Activated CD4-positive, alpha-beta memory T cell treated with anti-CD3 and anti-CD28 coated beads for 36 hours (primary cell): ENCODE measurements at regions of chr7 and their contacts with region 1.

Region 1: GRCh38 chr7:64562626-64563275 is at the start of gene ZNF680:
- DNase-seq: peak; percentile 95
- H3K4me3 Mint-ChIP-seq: peak within 1 kb of the TSS; percentile 97
- H3K27ac Mint-ChIP-seq: peak within 1 kb of the TSS; percentile 96
- H3K4me1 Mint-ChIP-seq: peaks cover 16% of the 10 kb centered on the region
- H3K27me3 Mint-ChIP-seq: no peaks in the 10 kb centered on the region
- total RNA-seq, gene ZNF680: 13.0 to 13.5 TPM

Region 2: GRCh38 chr7:63925623-63926460 is 636.9 kb before region 1 on chr7:
- CTCF ChIA-PET with region 1: no interaction called
- POLR2A ChIA-PET with region 1: no interaction called
- intact Hi-C with region 1: loop called (anchors 5 kb)
- DNase-seq: peak; percentile 91
- H3K4me3 Mint-ChIP-seq: peak overlapping the region; percentile 89
- H3K27ac Mint-ChIP-seq: peak overlapping the region; percentile 93
- H3K4me1 Mint-ChIP-seq: peaks cover 6% of the 10 kb centered on the region
- H3K27me3 Mint-ChIP-seq: no peaks in the 10 kb centered on the region

Region 3: DNA sequence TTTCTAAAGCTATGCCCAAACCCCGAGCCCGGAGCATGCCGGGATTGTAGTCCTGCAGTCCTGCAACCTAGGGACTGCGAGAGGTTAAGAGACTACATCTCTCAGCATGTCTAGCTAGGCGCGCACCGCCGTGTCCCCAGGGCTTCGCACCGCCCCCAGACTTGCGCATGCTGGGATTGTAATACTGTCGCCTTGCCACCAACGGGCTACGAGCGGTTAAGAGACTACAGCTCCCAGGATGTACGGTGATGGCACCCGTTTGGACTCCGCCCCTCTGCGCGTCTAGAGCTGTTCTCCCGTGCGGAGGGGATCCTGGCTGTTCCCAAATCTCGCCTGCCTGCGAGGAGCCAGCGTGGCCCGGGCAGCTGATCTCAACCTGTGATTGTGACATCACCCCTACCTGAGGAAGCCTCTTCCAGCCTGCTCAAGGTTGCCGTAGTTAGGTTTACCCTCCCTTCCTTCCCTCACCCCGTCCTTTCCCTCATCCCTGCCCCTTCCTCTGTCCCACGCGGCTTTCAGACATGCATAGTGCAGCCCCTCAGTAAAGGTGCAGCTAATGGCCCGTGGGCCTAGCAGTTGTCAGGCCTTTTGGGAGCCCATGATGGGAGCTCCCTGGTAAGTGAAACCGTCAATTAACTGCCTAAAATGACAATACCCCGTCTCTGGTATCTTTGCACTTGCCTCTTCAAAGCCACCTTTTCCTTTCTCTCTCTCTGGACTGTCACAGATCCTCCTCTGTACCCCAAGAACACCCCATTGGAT is 255.3 kb before region 1 on chr7:
- CTCF ChIA-PET with region 1: no interaction called
- POLR2A ChIA-PET with region 1: interaction called, 14 read pairs
- intact Hi-C with region 1: loop called (anchors 1 kb)
- DNase-seq: peak; percentile 96
- H3K4me3 Mint-ChIP-seq: peak overlapping the region; percentile 90
- H3K27ac Mint-ChIP-seq: peak overlapping the region; percentile 92
- H3K4me1 Mint-ChIP-seq: peaks cover 22% of the 10 kb centered on the region
- H3K27me3 Mint-ChIP-seq: no peaks in the 10 kb centered on the region

Region 4: GRCh38 chr7:64665980-64666662 is 103.4 kb after region 1 on chr7 and contains the start of gene ZNF107:
- CTCF ChIA-PET with region 1: no interaction called
- POLR2A ChIA-PET with region 1: interaction called, 13 read pairs
- intact Hi-C with region 1: loop called (anchors 5 kb)
- DNase-seq: peak; percentile 94
- H3K4me3 Mint-ChIP-seq: peak within 1 kb of the TSS; percentile 90
- H3K27ac Mint-ChIP-seq: peak within 1 kb of the TSS; percentile 95
- H3K4me1 Mint-ChIP-seq: peaks cover 43% of the 10 kb centered on the region
- H3K27me3 Mint-ChIP-seq: no peaks in the 10 kb centered on the region
- total RNA-seq, gene ZNF107: 13.5 to 14.3 TPM

Region 5: GRCh38 chr7:64794171-64794844 is 231.6 kb after region 1 on chr7 and contains the start of gene ZNF138:
- CTCF ChIA-PET with region 1: no interaction called
- POLR2A ChIA-PET with region 1: no interaction called
- intact Hi-C with region 1: loop called (anchors 10 kb)
- DNase-seq: peak; percentile 97
- H3K4me3 Mint-ChIP-seq: peak within 1 kb of the TSS; percentile 99
- H3K27ac Mint-ChIP-seq: peak within 1 kb of the TSS; percentile 97
- H3K4me1 Mint-ChIP-seq: peaks cover 18% of the 10 kb centered on the region
- H3K27me3 Mint-ChIP-seq: no peaks in the 10 kb centered on the region
- total RNA-seq, gene ZNF138: 10.3 to 10.5 TPM

Region 6: GRCh38 chr7:64902806-64903721 is 340.3 kb after region 1 on chr7 and contains the start of gene ZNF273:
- CTCF ChIA-PET with region 1: no interaction called
- POLR2A ChIA-PET with region 1: no interaction called
- intact Hi-C with region 1: loop called (anchors 2 kb)
- DNase-seq: peak; percentile 95
- H3K4me3 Mint-ChIP-seq: peak within 1 kb of the TSS; percentile 92
- H3K27ac Mint-ChIP-seq: peak within 1 kb of the TSS; percentile 87
- H3K4me1 Mint-ChIP-seq: peaks cover 39% of the 10 kb centered on the region
- H3K27me3 Mint-ChIP-seq: no peaks in the 10 kb centered on the region
- total RNA-seq, gene ZNF273: 9.6 to 10.9 TPM

Region 7: GRCh38 chr7:65373608-65374351 is 811.0 kb after region 1 on chr7 and contains the start of gene ZNF92:
- CTCF ChIA-PET with region 1: no interaction called
- POLR2A ChIA-PET with region 1: no interaction called
- intact Hi-C with region 1: loop called (anchors 10 kb)
- DNase-seq: peak; percentile 98
- H3K4me3 Mint-ChIP-seq: peak within 1 kb of the TSS; percentile 95
- H3K27ac Mint-ChIP-seq: peak within 1 kb of the TSS; percentile 88
- H3K4me1 Mint-ChIP-seq: peaks cover 30% of the 10 kb centered on the region
- H3K27me3 Mint-ChIP-seq: no peaks in the 10 kb centered on the region
- total RNA-seq, gene ZNF92: 12.9 to 13.9 TPM